AG04450 (cell line): ENCODE measurements at regions of chr3 and their contacts with region 1.

Region 1: GRCh38 chr3:48716982-48717746 is at the start of gene IP6K2:
- DNase-seq: peak; percentile 91
- H3K4me3 ChIP-seq: peak within 1 kb of the TSS; percentile 99
- H3K27ac ChIP-seq: peak within 1 kb of the TSS; percentile 87
- H3K27me3 ChIP-seq: no peaks in the 10 kb centered on the region
- CTCF ChIP-seq: no peak
- polyA plus RNA-seq, gene IP6K2: 110 and 115 TPM in 2 replicates

Region 2: DNA sequence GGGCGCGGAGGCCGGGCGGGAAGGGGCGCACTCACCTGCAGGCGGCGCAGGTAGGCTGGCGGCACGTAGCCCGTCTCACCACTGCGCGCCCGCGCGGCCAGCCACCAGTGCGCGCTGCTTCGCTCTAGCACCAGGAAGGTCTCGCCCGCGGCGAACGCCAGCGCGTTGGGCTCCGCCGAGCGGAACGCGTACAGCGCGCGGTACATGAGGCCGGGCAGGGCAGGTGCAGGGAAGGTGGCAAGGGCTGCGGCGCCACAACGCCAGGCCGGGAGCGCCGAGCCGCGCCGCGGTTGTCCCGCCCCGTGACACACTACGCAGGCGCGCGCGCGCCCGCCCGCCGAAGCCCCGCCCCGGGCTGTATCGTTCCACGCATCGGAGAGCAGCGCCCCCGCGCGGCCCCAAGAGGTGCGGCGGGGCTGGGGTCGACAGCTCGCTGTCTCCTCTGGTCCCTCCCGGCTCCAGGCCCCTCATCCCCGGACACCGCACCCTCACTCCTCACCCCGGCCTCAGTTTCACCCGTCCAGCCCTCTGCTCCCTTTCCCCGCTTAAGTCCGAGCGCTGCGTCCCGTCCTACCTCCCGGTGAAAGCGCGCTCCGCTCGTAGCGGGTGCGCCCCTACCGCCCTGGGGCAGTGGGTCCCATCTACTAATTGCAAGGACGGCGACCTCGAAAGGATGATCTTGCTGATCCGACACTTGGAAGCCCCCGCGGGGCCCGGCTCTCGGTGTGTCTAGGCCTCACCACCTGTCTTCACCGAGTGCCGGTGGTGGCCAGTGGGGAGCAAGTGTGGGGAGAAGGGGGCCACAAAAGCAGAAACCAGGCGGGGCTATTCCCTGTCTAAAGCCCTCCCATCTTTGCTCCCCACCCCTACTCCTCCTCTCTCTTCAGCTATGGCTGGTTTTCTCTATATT is 31.3 kb before region 1 on chr3 and contains the start of gene NCKIPSD:
- CTCF ChIA-PET with region 1: interaction called, 5 read pairs
- POLR2A ChIA-PET with region 1: interaction called, 10 read pairs
- DNase-seq: no peak
- H3K4me3 ChIP-seq: peak within 1 kb of the TSS; percentile 94
- H3K27ac ChIP-seq: peak within 1 kb of the TSS; percentile 21
- H3K27me3 ChIP-seq: no peaks in the 10 kb centered on the region
- CTCF ChIP-seq: peak; percentile 71
- polyA plus RNA-seq, gene NCKIPSD: 25.4 and 36.3 TPM in 2 replicates